Caco-2 (cell line): ENCODE measurements at regions of chr7 and their contacts with region 1.

Region 1: GRCh38 chr7:31192986-31193385 is 140.9 kb downstream of the ADCYAP1R1 start:
- DNase-seq: peak; percentile 69
- H3K4me3 ChIP-seq: no peak overlapping the region
- H3K4me3 Mint-ChIP-seq: no peak overlapping the region
- H3K27ac Mint-ChIP-seq: no peak overlapping the region
- H3K4me1 ChIP-seq: no peaks in the 10 kb centered on the region
- H3K4me1 Mint-ChIP-seq: no peaks in the 10 kb centered on the region
- H3K27me3 ChIP-seq: no peaks in the 10 kb centered on the region
- H3K27me3 Mint-ChIP-seq: peaks cover 5% of the 10 kb centered on the region
- CTCF ChIP-seq: peak; percentile 72 to 87

Region 2: DNA sequence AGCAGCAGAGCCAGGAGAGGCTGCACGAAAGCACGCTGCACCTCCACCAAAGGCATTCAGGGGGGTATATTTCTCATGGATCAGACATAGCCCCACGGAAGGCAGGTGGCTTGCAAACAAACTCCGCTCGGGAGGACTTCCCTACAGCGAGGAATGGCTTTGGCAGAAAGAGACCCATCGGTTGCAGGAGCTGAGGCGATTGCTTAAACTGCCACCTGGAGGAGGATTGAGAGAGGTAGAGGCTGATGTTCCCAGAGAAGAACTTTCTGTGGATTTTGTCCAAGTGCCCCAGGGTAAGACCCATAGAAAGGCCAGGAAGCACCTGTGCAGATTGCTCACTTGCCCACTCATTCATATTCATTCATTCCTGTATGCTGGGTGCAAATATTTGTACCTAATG is 58.5 kb after region 1 on chr7:
- CTCF ChIA-PET with region 1: no interaction called
- POLR2A ChIA-PET with region 1: no interaction called
- intact Hi-C with region 1: loop called (anchors 5 kb)
- DNase-seq: peak in 1 of 2 experiments; percentile 13
- H3K4me3 ChIP-seq: no peak overlapping the region
- H3K4me3 Mint-ChIP-seq: no peak overlapping the region
- H3K27ac Mint-ChIP-seq: no peak overlapping the region
- H3K4me1 ChIP-seq: no peaks in the 10 kb centered on the region
- H3K4me1 Mint-ChIP-seq: no peaks in the 10 kb centered on the region
- H3K27me3 ChIP-seq: peaks cover 2% of the 10 kb centered on the region; the same call in 1 of the 2 replicates
- H3K27me3 Mint-ChIP-seq: peaks cover 25% of the 10 kb centered on the region
- CTCF ChIP-seq: peak in 1 of 2 experiments; percentile 2

Region 3: GRCh38 chr7:31408140-31408745 is 215.3 kb after region 1 on chr7:
- CTCF ChIA-PET with region 1: no interaction called
- POLR2A ChIA-PET with region 1: no interaction called
- intact Hi-C with region 1: no loop called
- DNase-seq: peak in 1 of 2 experiments; percentile 38
- H3K4me3 ChIP-seq: no peak overlapping the region
- H3K4me3 Mint-ChIP-seq: no peak overlapping the region
- H3K27ac Mint-ChIP-seq: peak overlapping the region; percentile 69
- H3K4me1 ChIP-seq: peaks cover 17% of the 10 kb centered on the region
- H3K4me1 Mint-ChIP-seq: peaks cover 10% of the 10 kb centered on the region
- H3K27me3 ChIP-seq: no peaks in the 10 kb centered on the region
- H3K27me3 Mint-ChIP-seq: no peaks in the 10 kb centered on the region
- CTCF ChIP-seq: no peak

Region 4: GRCh38 chr7:31488562-31489203 is 295.7 kb after region 1 on chr7:
- CTCF ChIA-PET with region 1: no interaction called
- POLR2A ChIA-PET with region 1: no interaction called
- intact Hi-C with region 1: loop called (anchors 2 kb)
- DNase-seq: peak; percentile 62 to 63
- H3K4me3 ChIP-seq: no peak overlapping the region
- H3K4me3 Mint-ChIP-seq: no peak overlapping the region
- H3K27ac Mint-ChIP-seq: no peak overlapping the region
- H3K4me1 ChIP-seq: peaks cover 17% of the 10 kb centered on the region
- H3K4me1 Mint-ChIP-seq: no peaks in the 10 kb centered on the region
- H3K27me3 ChIP-seq: no peaks in the 10 kb centered on the region
- H3K27me3 Mint-ChIP-seq: no peaks in the 10 kb centered on the region
- CTCF ChIP-seq: peak; percentile 61 to 69